Activated CD8-positive, alpha-beta T cell treated with anti-CD3 and anti-CD28 coated beads, Interleukin-2, amount 10 ng/mL, durations not matched to agents 7 days and 5 days (primary cell): ENCODE measurements at regions of chr16 and their contacts with region 1.

Region 1: DNA sequence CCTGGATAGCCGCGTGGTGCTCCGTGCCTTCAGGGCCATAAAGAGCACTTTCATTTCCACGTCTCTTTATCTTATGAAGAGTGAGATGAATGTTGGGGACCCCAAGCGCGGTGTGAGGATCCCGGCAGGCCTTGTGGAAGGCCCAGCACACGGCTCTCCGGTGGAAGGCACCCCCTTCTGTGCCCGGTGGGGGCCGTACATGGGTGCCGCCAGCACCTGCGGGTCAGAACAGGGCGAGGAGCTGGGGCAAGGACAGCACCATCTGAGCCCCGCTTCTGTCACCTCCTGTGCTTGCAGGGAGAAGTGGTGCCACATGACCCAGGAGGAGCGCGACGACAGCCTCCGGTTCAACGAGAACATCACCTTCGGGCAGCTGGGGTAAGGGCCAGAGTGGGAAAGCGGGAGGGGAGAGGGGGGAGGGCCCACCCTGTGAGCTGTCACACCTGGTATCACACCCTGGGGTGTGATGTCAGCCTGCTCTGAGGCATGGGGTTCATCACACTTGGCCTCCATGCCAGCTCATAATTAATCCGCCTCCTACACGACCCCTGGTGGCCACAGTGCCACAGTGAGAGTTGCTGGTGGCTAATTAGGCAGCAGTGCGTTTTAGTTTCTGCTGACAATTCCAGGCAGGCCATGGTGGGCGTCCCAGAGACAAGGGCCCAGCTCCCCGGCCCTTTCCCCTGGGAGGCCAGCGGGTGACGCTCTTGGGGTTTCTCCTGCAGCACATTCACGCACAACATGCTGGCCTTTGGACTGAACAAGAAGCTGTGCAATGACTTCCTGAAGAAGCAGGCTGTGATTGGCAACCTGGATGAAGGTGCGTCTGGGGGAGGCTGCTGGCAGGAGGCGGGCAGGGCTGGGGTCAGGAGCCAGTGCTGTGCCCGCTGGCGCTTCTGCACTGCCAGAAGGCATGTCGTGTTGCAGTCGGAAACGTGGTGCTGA is 25.7 kb downstream of the CIBAR2 start:
- DNase-seq: peak; percentile 87
- ATAC-seq: peak; percentile 94
- H3K4me3 Mint-ChIP-seq: no peak overlapping the region
- H3K27ac Mint-ChIP-seq: no peak overlapping the region
- H3K4me1 Mint-ChIP-seq: peaks cover 29% of the 10 kb centered on the region
- H3K27me3 Mint-ChIP-seq: no peaks in the 10 kb centered on the region

Region 2: GRCh38 chr16:84970447-84971127 is 116.0 kb before region 1 on chr16:
- CTCF ChIA-PET with region 1: interaction called, 10 read pairs
- POLR2A ChIA-PET with region 1: no interaction called
- DNase-seq: peak; percentile 84
- ATAC-seq: peak; percentile 98
- H3K4me3 Mint-ChIP-seq: no peak overlapping the region
- H3K27ac Mint-ChIP-seq: no peak overlapping the region
- H3K4me1 Mint-ChIP-seq: peaks cover 5% of the 10 kb centered on the region
- H3K27me3 Mint-ChIP-seq: peaks cover 2% of the 10 kb centered on the region

Region 3: GRCh38 chr16:85010931-85011845 is 75.4 kb before region 1 on chr16 and contains the start of gene ZDHHC7:
- CTCF ChIA-PET with region 1: interaction called, 49 read pairs
- POLR2A ChIA-PET with region 1: interaction called, 6 read pairs
- DNase-seq: peak; percentile 91
- ATAC-seq: peak; percentile 94
- H3K4me3 Mint-ChIP-seq: peak within 1 kb of the TSS; percentile 96
- H3K27ac Mint-ChIP-seq: peak within 1 kb of the TSS; percentile 98
- H3K4me1 Mint-ChIP-seq: peaks cover 21% of the 10 kb centered on the region
- H3K27me3 Mint-ChIP-seq: peaks cover 4% of the 10 kb centered on the region
- total RNA-seq, gene ZDHHC7: 28.1 to 28.7 TPM

Region 4: DNA sequence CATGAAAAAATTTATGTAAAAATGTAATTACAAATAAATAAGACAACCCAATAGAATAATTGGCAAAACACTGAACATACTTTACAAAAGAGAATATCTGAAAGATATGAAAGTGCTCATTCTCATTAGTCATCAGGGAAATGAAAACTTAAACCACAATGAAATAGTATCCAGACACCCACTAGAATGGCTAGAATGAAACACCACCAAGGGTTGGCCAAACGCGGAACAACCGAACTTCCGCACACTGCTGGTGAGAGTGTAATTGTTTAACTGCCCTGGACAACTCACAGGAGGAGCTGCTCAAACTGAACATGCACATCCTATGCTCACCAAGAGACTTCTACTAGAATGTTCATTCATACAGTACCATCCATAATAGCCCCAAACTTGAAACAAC is 69.5 kb before region 1 on chr16:
- CTCF ChIA-PET with region 1: interaction called, 49 read pairs
- POLR2A ChIA-PET with region 1: no interaction called
- DNase-seq: no peak
- ATAC-seq: peak; percentile 38
- H3K4me3 Mint-ChIP-seq: no peak overlapping the region
- H3K27ac Mint-ChIP-seq: no peak overlapping the region
- H3K4me1 Mint-ChIP-seq: peaks cover 16% of the 10 kb centered on the region
- H3K27me3 Mint-ChIP-seq: peaks cover 20% of the 10 kb centered on the region

Region 5: GRCh38 chr16:85027349-85027957 is 59.2 kb before region 1 on chr16 and contains the start of gene KIAA0513:
- CTCF ChIA-PET with region 1: interaction called, 26 read pairs
- POLR2A ChIA-PET with region 1: interaction called, 3 read pairs
- DNase-seq: peak; percentile 95
- ATAC-seq: peak; percentile 81
- H3K4me3 Mint-ChIP-seq: peak within 1 kb of the TSS; percentile 87
- H3K27ac Mint-ChIP-seq: peak within 1 kb of the TSS; percentile 86
- H3K4me1 Mint-ChIP-seq: peaks cover 41% of the 10 kb centered on the region
- H3K27me3 Mint-ChIP-seq: no peaks in the 10 kb centered on the region
- total RNA-seq, gene KIAA0513: 8.1 to 9.1 TPM

Region 6: GRCh38 chr16:85055503-85056210 is 31.0 kb before region 1 on chr16:
- CTCF ChIA-PET with region 1: interaction called, 27 read pairs
- POLR2A ChIA-PET with region 1: interaction called, 7 read pairs
- DNase-seq: peak; percentile 95
- ATAC-seq: peak; percentile 99
- H3K4me3 Mint-ChIP-seq: peak overlapping the region; percentile 76
- H3K27ac Mint-ChIP-seq: peak overlapping the region; percentile 98
- H3K4me1 Mint-ChIP-seq: peaks cover 41% of the 10 kb centered on the region
- H3K27me3 Mint-ChIP-seq: peaks cover 3% of the 10 kb centered on the region

Region 7: GRCh38 chr16:85104821-85105391 is 18.3 kb after region 1 on chr16:
- CTCF ChIA-PET with region 1: interaction called, 13 read pairs
- POLR2A ChIA-PET with region 1: no interaction called
- DNase-seq: peak; percentile 59
- ATAC-seq: peak; percentile 86
- H3K4me3 Mint-ChIP-seq: peak overlapping the region; percentile 43
- H3K27ac Mint-ChIP-seq: peak overlapping the region; percentile 93
- H3K4me1 Mint-ChIP-seq: peaks cover 46% of the 10 kb centered on the region
- H3K27me3 Mint-ChIP-seq: peaks cover 2% of the 10 kb centered on the region